Right ventricle myocardium inferior (tissue), 1 donor: ENCODE measurements at regions of chr19 and their contacts with region 1.

Region 1: DNA sequence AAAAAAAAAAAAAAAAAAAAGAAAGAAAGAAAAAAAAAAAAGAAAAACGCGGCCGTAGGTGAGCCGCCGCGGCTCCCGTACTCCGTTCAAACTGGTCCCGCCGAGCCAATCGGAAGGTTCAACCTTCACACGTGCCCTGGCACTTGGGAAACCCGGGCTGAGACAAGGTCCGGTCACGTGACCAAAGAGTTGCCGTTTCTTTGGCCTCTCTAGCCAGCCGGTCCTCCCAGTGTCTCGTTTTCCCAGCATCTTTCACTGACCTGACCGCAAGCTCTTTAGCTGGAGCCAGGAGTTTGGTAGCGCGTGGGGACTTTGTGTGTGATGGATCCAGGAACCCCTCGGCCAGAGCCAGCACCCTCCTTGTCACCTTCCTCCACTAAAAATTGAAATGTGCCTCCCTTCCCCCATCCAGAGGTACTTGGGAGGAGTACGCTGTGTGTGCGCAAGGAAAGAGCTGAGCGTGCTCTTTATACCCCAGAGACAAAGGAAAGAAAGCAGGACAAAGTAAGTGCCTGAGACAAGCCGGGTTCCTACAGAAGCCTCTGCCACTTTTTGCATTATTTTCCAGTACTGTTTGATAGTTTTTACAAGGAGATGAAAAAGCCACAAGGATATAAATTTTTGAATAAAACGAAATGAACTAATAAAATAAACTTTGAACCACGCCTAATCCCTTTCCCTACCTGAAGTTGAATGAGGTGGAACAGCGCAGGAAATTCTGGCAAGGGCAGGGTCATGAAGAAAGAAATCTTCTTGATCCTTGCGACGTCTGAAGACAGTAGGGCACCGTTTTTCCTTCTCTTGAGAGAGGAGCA is 959 bp downstream of the TNPO2 start:
- DNase-seq: peak; percentile 98
- ATAC-seq: peak; percentile 92

Region 2: DNA sequence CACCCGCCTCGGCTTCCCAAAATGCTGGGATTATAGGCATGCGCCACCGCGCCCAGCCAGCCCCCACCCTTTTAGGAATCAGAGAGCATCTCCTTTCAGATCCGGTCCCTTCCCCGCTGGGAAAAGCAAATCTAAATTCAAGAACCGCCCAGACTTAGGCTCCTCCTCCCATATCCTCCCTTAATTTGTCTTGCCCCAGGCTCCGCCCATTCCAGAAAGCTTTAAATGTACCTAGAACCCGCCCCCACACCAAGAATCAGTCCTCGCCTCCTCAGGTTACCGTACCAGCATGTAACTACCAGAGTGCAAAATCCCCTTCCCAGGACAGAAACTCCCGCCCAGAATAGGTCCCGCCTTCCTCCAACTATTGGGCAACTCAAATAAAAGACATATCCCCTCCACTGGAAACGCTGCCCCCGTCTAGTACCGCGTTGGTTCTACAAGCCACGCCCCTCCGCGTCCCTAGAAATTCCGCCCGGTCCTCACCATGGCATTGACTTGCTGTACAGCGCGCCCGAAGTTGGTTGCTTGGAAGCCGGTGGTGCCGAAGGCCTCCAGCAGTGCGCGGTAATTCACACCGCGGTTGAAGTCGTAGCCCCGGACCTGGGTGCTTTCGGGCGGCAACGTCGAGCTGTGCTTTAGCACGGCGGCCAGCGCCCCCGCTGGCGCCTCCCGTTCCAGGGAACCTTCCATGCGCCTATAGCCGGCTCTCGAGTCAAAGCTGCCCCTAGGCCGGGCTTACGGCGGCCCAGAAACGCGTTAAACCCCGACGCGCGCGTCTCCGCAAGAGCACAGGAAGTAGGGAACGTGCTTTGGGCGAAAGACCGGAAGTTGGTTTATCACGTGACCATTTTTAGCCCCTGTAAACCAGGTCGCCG is 41.5 kb before region 1 on chr19 and contains the start of gene DHPS:
- intact Hi-C with region 1: loop called (anchors 5 kb)
- DNase-seq: peak; percentile 96
- ATAC-seq: peak; percentile 90
- total RNA-seq, gene DHPS: 45.9 TPM

Region 3: GRCh38 chr19:12736995-12737834 is 14.4 kb after region 1 on chr19 and contains the start of gene GET3:
- intact Hi-C with region 1: loop called (anchors 1 kb)
- DNase-seq: peak; percentile 91
- ATAC-seq: peak; percentile 94
- total RNA-seq, gene GET3: 65.8 TPM

Region 4: DNA sequence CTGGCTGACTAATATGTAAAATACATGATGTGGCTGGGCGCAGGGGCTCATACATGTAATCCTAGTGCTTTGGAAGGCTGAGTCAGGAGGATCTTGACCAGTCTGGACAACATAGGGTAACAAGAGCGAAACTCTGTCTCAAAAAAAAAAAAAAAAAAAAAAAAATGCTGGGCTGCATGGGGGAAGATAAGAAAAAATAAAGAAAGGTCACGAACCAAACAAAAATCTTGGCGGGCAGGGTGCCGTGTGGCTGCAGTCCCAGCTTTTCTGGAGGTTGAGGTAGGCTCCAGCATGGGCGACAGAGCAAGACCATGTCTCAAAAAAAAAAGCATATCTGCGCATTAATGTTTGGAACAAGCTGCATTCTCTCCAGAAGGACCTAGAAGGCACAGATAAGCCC is 92.3 kb after region 1 on chr19:
- intact Hi-C with region 1: no loop called
- DNase-seq: no peak
- ATAC-seq: no peak